HEK293 (cell line): ENCODE measurements at regions of chr19 and their contacts with region 1.

Region 1: DNA sequence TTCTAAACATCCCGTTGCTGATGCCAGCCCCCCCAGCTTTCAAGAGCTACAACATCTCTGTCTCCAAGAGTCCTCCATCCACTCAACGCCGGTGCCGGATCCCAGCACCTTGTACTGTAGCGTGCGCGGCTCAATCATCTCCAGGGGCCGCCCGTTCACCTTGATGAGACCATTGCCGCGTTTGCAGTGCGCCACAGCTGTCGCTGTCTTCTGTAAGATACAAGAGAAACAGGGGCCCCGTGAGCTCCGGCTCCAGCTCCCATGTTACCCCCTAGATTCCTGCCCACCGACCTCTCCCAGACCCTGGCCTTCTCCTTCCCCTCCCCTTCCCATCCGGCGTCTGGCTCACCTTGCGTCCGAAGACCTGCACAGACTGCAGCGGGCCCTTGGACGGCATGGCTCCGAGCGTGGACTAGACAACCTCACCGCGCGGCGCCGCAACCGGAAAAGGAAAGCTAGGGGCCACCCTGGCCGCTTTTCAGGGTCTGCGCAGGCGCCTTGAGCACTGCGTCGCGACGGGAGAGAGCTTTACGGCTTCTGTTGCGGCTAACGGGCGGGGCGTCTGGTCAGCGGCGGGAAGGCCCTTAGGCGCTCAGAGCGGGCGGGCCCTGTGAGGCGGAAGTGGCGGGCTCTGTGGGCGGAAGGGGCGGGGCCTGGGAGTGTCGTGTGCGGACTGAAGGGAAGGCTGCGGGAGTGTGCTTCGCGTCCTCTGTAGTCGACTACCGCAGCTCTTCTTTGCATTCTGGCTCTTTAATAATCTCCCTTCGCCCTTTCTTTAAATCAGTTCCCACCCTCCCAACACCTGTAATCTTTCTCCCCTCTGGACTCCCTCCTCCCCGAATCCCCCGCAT is at the start of gene RPS16:
- H3K4me3 ChIP-seq: peak within 1 kb of the TSS; percentile 79
- H3K27ac ChIP-seq: peak within 1 kb of the TSS; percentile 100
- H3K4me1 ChIP-seq: peaks cover 29% of the 10 kb centered on the region
- CTCF ChIP-seq: peak; percentile 70; the same call in 1 of the 2 replicates

Region 2: DNA sequence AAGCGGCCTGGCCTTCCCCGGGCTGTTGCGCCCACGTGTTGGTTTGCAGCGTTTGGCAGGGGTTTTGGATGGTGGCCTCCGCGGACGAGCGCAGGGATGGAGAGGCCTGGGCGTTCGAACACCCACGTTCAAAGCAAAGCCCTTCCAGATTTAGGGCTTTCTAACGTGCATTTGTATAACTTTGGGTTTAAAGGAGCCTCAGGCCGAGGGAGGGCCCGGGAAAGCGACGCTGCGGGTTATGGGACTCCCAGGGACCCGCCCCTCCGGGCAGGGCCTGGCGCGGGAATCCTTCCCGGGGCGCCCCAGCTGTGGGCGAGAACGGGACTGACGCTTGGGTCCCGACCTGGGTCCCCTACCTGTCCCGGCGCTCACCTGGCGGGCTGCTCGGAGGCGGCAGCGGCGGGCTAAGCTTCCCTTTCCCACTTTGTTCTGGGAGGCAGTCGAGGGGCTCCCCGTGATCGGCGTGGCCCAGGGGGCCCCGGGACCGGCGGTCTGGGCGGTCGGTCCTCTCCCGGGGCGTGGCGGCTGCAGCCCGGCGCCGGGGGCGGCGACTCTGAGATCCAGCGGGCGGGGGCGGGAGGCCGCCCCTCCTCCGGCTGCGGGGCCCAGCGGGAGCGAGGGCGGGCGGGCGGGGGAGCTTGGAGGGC is 460.4 kb before region 1 on chr19 and contains the start of gene FBXO17:
- CTCF ChIA-PET with region 1: no interaction called
- POLR2A ChIA-PET with region 1: interaction called, 10 read pairs
- H3K4me3 ChIP-seq: peak within 1 kb of the TSS; percentile 65
- H3K27ac ChIP-seq: peak within 1 kb of the TSS; percentile 96
- H3K4me1 ChIP-seq: peaks cover 32% of the 10 kb centered on the region
- CTCF ChIP-seq: no peak

Region 3: GRCh38 chr19:39397360-39398296 is 38.1 kb before region 1 on chr19:
- CTCF ChIA-PET with region 1: interaction called, 16 read pairs
- POLR2A ChIA-PET with region 1: interaction called, 113 read pairs
- H3K4me3 ChIP-seq: no peak overlapping the region
- H3K27ac ChIP-seq: peak overlapping the region; percentile 3; the same call in 1 of the 2 replicates
- H3K4me1 ChIP-seq: peaks cover 10% of the 10 kb centered on the region
- CTCF ChIP-seq: peak; percentile 100

Region 4: DNA sequence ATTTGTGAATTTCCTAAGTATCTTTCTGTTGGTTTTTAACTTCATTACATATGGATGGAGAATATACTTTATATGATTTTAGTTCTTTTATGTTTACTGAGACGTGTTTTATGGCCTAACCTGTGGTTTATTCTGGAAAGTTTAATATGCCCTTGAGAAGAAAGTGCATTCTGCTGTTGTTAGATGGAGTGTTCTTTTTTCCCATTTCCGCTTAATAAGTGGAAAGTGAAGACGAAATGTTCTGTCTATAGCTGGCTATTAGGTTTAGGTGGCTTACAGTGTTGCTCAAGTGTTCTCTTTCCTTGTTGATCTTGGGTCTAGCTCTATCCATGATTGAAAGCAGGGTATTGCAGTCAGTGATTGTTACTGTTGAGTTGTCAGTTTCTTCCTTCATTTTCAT is 27.7 kb after region 1 on chr19:
- CTCF ChIA-PET with region 1: interaction called, 3 read pairs
- POLR2A ChIA-PET with region 1: interaction called, 37 read pairs
- H3K4me3 ChIP-seq: no peak overlapping the region
- H3K27ac ChIP-seq: peak overlapping the region; percentile 16; the same call in 1 of the 2 replicates
- H3K4me1 ChIP-seq: no peaks in the 10 kb centered on the region
- CTCF ChIP-seq: no peak

Region 5: GRCh38 chr19:39494661-39495060 is 58.9 kb after region 1 on chr19:
- CTCF ChIA-PET with region 1: interaction called, 20 read pairs
- POLR2A ChIA-PET with region 1: interaction called, 29 read pairs
- H3K4me3 ChIP-seq: no peak overlapping the region
- H3K27ac ChIP-seq: peak overlapping the region; percentile 56
- H3K4me1 ChIP-seq: peaks cover 16% of the 10 kb centered on the region
- CTCF ChIP-seq: no peak

Region 6: DNA sequence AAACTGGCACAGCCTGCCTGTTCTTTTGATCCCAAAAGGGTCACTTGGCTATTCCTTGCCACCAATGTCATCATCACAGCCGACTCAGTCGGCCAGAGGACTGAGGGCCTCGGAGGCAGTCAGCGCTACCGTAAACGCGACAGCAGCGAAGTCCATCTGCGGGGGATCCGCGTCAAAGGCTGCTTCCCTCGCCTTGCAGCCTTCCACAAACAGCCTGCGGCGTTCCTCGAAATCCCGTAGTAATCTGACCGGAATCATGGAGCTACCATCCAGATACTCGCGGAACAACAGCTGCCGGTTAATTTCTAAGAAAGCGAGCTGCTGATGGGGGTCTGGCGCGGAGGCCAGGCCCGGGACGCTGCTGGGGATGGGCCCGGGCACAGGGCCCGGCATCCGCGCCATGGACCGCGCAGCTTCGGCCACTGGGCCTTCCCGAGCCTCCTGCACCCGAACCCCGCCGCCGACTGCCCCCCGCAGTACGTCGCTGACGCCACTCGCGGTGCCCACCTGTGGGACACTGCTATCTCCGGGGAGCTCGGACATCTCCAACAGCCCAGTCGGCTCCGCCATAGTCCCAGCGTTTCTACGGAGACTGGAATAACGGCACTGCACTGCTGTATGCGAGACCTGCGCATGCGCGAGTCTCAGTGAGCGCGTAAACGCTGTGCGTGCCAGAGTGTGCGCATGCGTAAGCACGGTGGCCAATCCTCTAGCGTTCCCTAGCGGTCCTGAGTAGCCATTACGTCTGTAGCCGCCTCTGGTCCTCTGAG is 96.7 kb after region 1 on chr19 and contains the start of gene EID2B:
- CTCF ChIA-PET with region 1: interaction called, 111 read pairs
- POLR2A ChIA-PET with region 1: interaction called, 56 read pairs
- H3K4me3 ChIP-seq: peak within 1 kb of the TSS; percentile 88
- H3K27ac ChIP-seq: peak within 1 kb of the TSS; percentile 85
- H3K4me1 ChIP-seq: peaks cover 20% of the 10 kb centered on the region
- CTCF ChIP-seq: peak; percentile 100

Region 7: GRCh38 chr19:39846176-39846677 is 410.5 kb after region 1 on chr19 and contains the start of gene FBL:
- CTCF ChIA-PET with region 1: no interaction called
- POLR2A ChIA-PET with region 1: interaction called, 18 read pairs
- H3K4me3 ChIP-seq: peak within 1 kb of the TSS; percentile 62
- H3K27ac ChIP-seq: peak within 1 kb of the TSS; percentile 79
- H3K4me1 ChIP-seq: peaks cover 49% of the 10 kb centered on the region
- CTCF ChIP-seq: no peak